Heart left ventricle (tissue), 16 donors: ENCODE measurements at regions of chr2 and their contacts with region 1.

Region 1: DNA sequence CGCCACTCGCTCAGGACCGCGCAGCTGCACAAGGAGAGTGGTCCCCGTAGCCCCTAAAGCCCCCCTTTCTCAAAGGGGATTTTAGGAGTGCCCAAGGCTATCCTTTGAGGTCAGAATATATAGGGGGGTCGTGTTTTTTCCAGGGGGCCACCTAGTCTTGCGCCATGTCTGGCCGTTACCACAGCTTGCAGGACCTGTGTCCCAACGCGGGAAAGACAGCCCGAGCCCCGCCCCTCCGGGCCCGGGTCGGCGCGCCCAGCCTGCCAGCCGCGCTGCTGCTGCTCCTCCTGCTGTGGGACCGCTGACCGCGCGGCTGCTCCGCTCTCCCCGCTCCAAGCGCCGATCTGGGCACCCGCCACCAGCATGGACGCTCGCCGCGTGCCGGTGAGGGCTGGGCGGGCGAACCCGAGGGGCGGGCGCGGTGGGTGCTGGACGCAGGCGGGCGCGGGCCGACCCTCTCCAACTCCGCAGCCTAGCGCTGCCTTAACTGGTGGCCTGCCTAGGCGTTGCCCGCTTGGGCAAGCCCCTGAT is at the start of gene CDCA7:
- DNase-seq: peak; percentile 21 to 76 (median 56)
- ATAC-seq: peak; percentile 55 to 94 (median 88)
- H3K4me3 ChIP-seq: peak within 1 kb of the TSS; percentile 46 to 85 (median 62)
- H3K27ac ChIP-seq: peak within 1 kb of the TSS in 9 of 12 donors; percentile 32 to 72 (median 57)
- H3K4me1 ChIP-seq: peaks cover 0 to 25% (median 5%) of the 10 kb centered on the region in 12 donors
- H3K27me3 ChIP-seq: peaks cover 0 to 59% (median 26%) of the 10 kb centered on the region in 9 donors
- CTCF ChIP-seq: peak in 2 of 12 donors; percentile 11 to 14
- POLR2A ChIP-seq: no peak
- total RNA-seq, gene CDCA7: 0.12 to 3.7 (median 1.1) TPM

Region 2: DNA sequence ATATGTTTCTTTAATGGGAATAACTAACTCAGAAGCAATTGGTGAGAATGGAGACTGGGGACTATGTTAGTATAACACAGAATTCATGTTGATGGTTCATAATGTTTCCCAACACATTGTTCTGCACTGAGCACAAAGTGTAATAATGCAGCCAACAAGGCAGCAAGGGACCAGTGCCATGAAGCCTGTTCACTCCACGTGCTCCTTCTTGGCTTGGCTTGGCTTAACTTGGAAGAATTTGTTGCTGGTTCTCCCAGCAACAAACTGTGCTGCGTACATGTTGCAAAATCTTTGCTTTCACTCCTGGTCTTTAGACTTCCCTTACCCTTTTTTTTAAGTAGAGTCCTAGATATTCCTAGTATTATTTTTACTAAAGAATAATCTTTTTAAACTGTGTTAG is 149.3 kb before region 1 on chr2:
- intact Hi-C with region 1: no loop called
- DNase-seq: peak; percentile 65 to 88 (median 81)
- ATAC-seq: peak; percentile 92 to 97 (median 96)
- H3K4me3 ChIP-seq: no peak overlapping the region
- H3K27ac ChIP-seq: peak overlapping the region; percentile 61 to 89 (median 78)
- H3K4me1 ChIP-seq: peaks cover 0 to 79% (median 29%) of the 10 kb centered on the region in 12 donors
- H3K27me3 ChIP-seq: no peaks in the 10 kb centered on the region
- CTCF ChIP-seq: no peak
- POLR2A ChIP-seq: no peak

Region 3: GRCh38 chr2:173239644-173240043 is 115.0 kb before region 1 on chr2:
- intact Hi-C with region 1: loop called in 1 of 10 experiments (anchors 10 kb)
- DNase-seq: no peak
- ATAC-seq: no peak
- H3K4me3 ChIP-seq: no peak overlapping the region
- H3K27ac ChIP-seq: no peak overlapping the region
- H3K4me1 ChIP-seq: no peaks in the 10 kb centered on the region
- H3K27me3 ChIP-seq: no peaks in the 10 kb centered on the region
- CTCF ChIP-seq: no peak
- POLR2A ChIP-seq: no peak

Region 4: GRCh38 chr2:173537694-173538093 is 183.0 kb after region 1 on chr2:
- intact Hi-C with region 1: no loop called
- DNase-seq: no peak
- ATAC-seq: no peak
- H3K4me3 ChIP-seq: no peak overlapping the region
- H3K27ac ChIP-seq: no peak overlapping the region
- H3K4me1 ChIP-seq: no peaks in the 10 kb centered on the region
- H3K27me3 ChIP-seq: peaks cover 0 to 9% (median 0%) of the 10 kb centered on the region in 9 donors
- CTCF ChIP-seq: no peak
- POLR2A ChIP-seq: no peak